Transverse colon (tissue), 4 donors: ENCODE measurements at regions of chr17 and their contacts with region 1.

Region 1: GRCh38 chr17:73595479-73595878 is 48.8 kb downstream of the SDK2 start:
- DNase-seq: peak; percentile 45
- H3K4me3 ChIP-seq: no peak overlapping the region
- H3K27ac ChIP-seq: peak overlapping the region in 1 of 4 donors; percentile 10
- H3K4me1 ChIP-seq: no peaks in the 10 kb centered on the region
- H3K27me3 ChIP-seq: no peaks in the 10 kb centered on the region
- CTCF ChIP-seq: peak; percentile 14 to 46 (median 27)
- EP300 ChIP-seq: no peak
- POLR2A ChIP-seq: no peak

Region 2: DNA sequence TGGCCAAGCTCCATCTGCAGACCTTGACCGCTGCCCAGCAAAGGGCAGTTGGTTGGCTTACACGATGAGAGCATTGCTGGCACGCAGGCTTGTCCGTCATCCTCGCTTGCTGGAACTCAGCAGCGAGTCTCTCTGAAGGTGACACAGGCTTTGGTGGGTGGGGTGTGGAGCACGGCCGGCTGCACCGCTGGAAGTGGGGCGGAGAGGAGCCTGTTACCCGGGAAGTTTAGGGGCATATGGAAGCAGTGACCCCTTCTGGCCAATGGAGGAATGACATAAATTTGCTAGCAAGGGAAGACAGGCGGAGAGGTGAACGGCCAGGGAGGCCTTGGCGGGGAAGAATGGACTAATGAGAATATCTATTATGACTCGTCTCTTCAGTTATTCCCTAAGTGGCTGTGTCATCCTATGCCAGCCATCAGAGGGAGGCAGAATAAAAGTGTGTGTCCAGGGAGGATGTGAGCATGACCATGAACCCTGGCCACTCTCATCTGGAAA is 114.7 kb after region 1 on chr17:
- in situ Hi-C with region 1: loop called in 1 of 4 experiments (anchors 25 kb)
- intact Hi-C with region 1: no loop called
- DNase-seq: peak; percentile 79
- H3K4me3 ChIP-seq: no peak overlapping the region
- H3K27ac ChIP-seq: no peak overlapping the region
- H3K4me1 ChIP-seq: peaks cover 0 to 3% (median 2%) of the 10 kb centered on the region in 4 donors
- H3K27me3 ChIP-seq: peaks cover 22% of the 10 kb centered on the region
- CTCF ChIP-seq: peak; percentile 59 to 89 (median 83)
- EP300 ChIP-seq: no peak
- POLR2A ChIP-seq: no peak